Dorsolateral prefrontal cortex (tissue), 120 donors: ENCODE measurements at regions of chr9 and their contacts with region 1.

Region 1: DNA sequence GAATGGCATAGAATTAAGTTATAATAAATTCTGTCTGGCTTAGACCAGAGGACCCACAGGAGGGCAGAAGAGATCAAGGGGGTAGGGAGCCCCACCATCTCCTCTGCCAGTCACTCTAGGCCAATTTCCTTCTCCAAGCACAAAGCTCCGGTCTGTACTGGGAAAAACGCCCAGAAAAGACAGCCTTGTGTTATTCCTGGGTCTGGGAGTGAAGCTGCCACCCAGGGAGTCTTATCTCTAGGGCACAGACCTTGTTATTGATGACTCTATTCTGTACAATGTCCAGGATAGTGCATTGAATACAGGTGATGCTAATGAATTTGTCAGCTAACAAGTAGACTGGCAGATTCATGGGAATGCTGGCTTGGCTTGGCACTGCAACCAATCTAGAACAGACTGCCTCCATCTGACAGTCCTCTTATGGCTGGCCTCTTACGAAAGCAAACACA is 60.7 kb downstream of the MED27 start:
- DNase-seq: peak in 4 of 10 donors; percentile 39 to 59 (median 54)
- H3K4me3 ChIP-seq: no peak overlapping the region
- H3K27ac ChIP-seq: peak overlapping the region in 31 of 59 donors; percentile 0 to 73 (median 36)
- H3K27me3 ChIP-seq: no peaks in the 10 kb centered on the region
- CTCF ChIP-seq: peak in 51 of 56 donors; percentile 11 to 70 (median 44)

Region 2: DNA sequence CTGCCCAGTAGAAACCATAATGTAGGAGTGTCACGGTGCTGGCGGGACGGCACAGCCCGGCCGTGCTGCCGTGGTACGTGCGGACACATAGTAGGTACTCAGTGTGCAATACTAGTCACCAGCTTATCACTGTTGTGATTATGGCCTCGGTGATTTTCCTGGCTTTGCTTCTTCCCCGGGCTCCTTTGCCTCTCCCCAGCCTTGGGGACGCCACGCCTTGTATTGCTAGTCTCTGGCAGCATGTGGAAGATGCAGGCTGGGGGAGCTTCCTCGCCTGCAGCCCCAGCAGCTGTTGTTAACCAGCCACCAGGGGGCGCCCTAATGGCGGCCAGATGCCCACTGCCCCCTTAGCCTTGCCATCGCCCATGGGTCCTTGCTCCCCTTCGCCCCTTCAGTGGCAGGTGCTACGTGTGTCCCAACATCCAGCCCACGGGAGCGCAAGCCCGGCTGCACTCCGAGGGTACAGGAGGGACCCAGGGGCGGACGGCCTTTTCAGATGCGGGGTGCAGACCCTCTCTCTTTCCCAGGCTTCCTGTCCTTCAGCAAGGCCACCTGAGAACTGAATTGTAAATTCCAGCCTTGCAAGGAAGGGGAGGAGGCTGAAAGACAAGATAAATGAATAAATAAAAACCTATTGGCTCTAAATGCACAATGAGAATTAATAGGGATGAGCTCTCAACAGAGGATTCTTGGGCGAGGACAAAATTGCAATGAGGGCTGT is 150.9 kb after region 1 on chr9:
- intact Hi-C with region 1: loop called in 1 of 2 experiments (anchors 10 kb)
- DNase-seq: peak in 8 of 10 donors; percentile 52 to 80 (median 63)
- H3K4me3 ChIP-seq: no peak overlapping the region
- H3K27ac ChIP-seq: peak overlapping the region in 7 of 59 donors; percentile 1 to 52 (median 16)
- H3K27me3 ChIP-seq: no peaks in the 10 kb centered on the region
- CTCF ChIP-seq: peak; percentile 70 to 96 (median 87)

Region 3: DNA sequence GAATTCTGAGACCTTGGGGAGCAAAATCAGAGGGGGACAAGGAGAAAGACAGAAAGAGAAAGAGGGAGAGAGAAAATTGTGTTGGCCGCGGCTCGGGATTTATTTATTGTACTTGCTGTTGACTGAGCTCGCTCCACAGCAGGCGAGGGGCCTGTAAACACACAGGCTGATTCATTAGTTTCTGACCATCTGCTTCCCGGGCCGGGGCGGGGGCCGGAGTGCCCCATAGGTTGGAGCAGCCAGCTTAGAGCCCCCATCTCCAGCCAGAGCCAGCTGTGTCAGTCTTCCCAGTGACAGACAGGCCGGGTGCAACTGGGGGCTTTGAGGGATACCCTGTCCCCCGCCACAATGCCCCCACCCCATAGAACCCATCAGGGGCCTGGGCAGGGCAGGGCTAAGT is 173.7 kb after region 1 on chr9:
- intact Hi-C with region 1: no loop called
- DNase-seq: peak; percentile 61 to 89 (median 82)
- H3K4me3 ChIP-seq: peak overlapping the region in 25 of 59 donors; percentile 6 to 48 (median 30)
- H3K27ac ChIP-seq: peak overlapping the region; percentile 62 to 99 (median 97)
- H3K27me3 ChIP-seq: no peaks in the 10 kb centered on the region
- CTCF ChIP-seq: peak in 1 of 56 donors; percentile 13

Region 4: GRCh38 chr9:132434881-132435280 is 415.9 kb after region 1 on chr9:
- intact Hi-C with region 1: no loop called
- DNase-seq: no peak
- H3K4me3 ChIP-seq: no peak overlapping the region
- H3K27ac ChIP-seq: no peak overlapping the region
- H3K27me3 ChIP-seq: peaks cover 0 to 68% (median 27%) of the 10 kb centered on the region in 45 donors
- CTCF ChIP-seq: no peak